Esophagus muscularis mucosa (tissue), 4 donors: ENCODE measurements at regions of chr20 and their contacts with region 1.

Region 1: GRCh38 chr20:36550797-36551299 is 9.5 kb downstream of the MYL9 start:
- DNase-seq: no peak
- H3K4me3 ChIP-seq: no peak overlapping the region
- H3K27ac ChIP-seq: peak overlapping the region; percentile 70 to 97 (median 88)
- H3K4me1 ChIP-seq: peaks cover 22 to 59% (median 56%) of the 10 kb centered on the region in 4 donors
- H3K27me3 ChIP-seq: no peaks in the 10 kb centered on the region
- CTCF ChIP-seq: no peak
- EP300 ChIP-seq: no peak
- POLR2A ChIP-seq: no peak

Region 2: DNA sequence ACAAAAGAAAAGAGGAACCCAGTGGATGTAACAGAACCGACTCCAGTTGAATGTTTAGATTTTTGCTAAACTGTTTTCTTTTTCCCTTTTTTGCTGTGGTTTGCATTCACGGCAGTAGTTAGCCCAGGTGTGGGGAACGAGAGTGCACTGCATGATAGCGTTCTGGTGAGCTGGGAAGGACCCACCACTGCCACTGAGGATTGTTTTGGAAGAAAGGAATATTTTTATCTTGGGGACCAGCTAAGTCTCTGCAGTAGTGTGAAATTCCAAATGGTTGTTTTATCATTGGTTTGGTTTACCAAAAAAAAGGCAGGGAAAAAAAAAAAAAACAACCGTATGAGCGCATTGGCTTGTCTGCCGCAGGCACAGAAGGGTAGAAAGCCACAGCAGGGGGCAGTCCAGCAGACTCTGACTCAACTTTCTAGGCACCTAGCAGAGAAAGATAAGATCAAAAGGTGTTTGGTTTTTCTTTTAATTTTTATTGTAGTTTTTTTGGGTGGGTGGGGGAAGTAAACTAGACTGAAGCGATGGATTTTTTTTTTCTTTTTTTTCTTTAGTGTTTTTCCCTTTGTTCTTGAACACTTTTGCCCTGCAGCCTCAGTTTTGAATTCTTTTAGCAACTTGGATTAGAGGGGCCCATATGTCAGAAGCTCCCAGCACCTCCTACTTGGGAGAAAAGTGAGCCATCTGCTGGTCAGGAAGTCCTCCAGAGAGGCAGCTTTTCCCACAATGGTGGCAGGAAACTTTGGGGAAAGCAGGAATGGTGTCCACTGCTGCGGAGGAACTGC is 41.2 kb after region 1 on chr20:
- intact Hi-C with region 1: loop called (anchors 5 kb)
- DNase-seq: no peak
- H3K4me3 ChIP-seq: no peak overlapping the region
- H3K27ac ChIP-seq: no peak overlapping the region
- H3K4me1 ChIP-seq: peaks cover 0 to 8% (median 0%) of the 10 kb centered on the region in 4 donors
- H3K27me3 ChIP-seq: no peaks in the 10 kb centered on the region
- CTCF ChIP-seq: peak; percentile 34 to 46 (median 45)
- EP300 ChIP-seq: no peak
- POLR2A ChIP-seq: no peak

Region 3: GRCh38 chr20:36773597-36774390 is 222.9 kb after region 1 on chr20 and contains the start of gene DSN1:
- intact Hi-C with region 1: no loop called
- DNase-seq: peak; percentile 99
- H3K4me3 ChIP-seq: peak within 1 kb of the TSS; percentile 72 to 81 (median 76)
- H3K27ac ChIP-seq: peak within 1 kb of the TSS; percentile 91 to 96 (median 94)
- H3K4me1 ChIP-seq: peaks cover 18 to 52% (median 41%) of the 10 kb centered on the region in 4 donors
- H3K27me3 ChIP-seq: no peaks in the 10 kb centered on the region
- CTCF ChIP-seq: no peak
- EP300 ChIP-seq: no peak
- POLR2A ChIP-seq: peak; percentile 22
- total RNA-seq, gene DSN1: 5.1 to 7.5 (median 6.3) TPM

Region 4: DNA sequence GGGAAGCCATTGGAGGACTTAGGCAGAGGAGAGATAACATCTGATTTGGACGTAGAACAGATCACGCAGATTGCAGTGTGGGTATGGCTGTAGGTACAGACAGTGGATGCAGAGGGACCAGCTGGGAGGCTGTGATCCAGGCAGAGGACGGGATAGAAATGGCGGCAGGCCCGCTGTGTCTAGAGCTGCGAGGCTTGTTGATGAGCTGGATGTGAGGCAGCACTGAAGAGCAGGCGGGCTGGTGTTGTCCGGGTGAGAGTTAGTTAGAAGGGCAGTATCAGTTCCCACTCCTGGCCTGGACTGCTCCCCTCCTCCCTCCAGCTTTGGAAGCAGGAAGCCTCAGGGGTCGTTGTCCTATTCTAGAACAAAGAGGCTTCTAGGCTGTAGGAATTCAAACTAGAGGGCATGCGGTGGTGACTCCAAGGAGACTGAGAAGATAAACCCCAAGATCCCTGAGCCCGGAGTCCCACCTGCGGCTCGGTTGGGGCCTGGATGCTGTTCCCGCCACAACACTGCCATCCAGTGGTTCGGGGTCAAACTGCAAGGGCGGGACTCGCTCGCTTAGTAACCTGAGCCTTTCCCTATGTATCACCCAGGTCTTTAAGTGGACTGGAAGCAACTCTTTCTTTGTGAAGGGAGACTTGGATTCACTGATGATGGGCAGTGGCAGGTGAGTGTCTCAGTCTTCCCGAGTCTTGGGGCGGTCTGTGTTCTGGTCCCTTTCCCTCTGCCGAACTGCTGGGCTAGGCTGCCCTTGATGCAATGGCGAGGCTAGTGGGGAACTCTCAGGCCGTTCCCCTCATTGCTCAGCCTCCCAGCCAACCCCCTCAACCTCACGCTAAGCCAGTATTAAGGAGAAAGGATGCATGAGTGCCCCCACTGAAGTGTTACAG is 336.3 kb after region 1 on chr20:
- intact Hi-C with region 1: loop called (anchors 10 kb)
- DNase-seq: peak; percentile 96
- H3K4me3 ChIP-seq: peak overlapping the region in 1 of 4 donors; percentile 12
- H3K27ac ChIP-seq: peak overlapping the region in 2 of 4 donors; percentile 45 to 62
- H3K4me1 ChIP-seq: peaks cover 9 to 18% (median 12%) of the 10 kb centered on the region in 4 donors
- H3K27me3 ChIP-seq: no peaks in the 10 kb centered on the region
- CTCF ChIP-seq: peak; percentile 94 to 98 (median 97)
- EP300 ChIP-seq: no peak
- POLR2A ChIP-seq: no peak